Activated naive CD4-positive, alpha-beta T cell treated with anti-CD3 and anti-CD28 coated beads, Interleukin-2, amount 10 ng/mL, durations not matched to agents 7 days and 5 days (primary cell): ENCODE measurements at regions of chr2 and their contacts with region 1.

Region 1: GRCh38 chr2:73907840-73908452 is 15.1 kb downstream of the ACTG2 start:
- DNase-seq: peak; percentile 73
- H3K4me3 Mint-ChIP-seq: no peak overlapping the region
- H3K27ac Mint-ChIP-seq: no peak overlapping the region
- H3K4me1 Mint-ChIP-seq: no peaks in the 10 kb centered on the region
- H3K27me3 Mint-ChIP-seq: peaks cover 4% of the 10 kb centered on the region

Region 2: GRCh38 chr2:73828818-73829570 is 79.0 kb before region 1 on chr2 and contains the start of gene STAMBP:
- CTCF ChIA-PET with region 1: interaction called, 17 read pairs
- DNase-seq: peak; percentile 97
- H3K4me3 Mint-ChIP-seq: peak within 1 kb of the TSS; percentile 91
- H3K27ac Mint-ChIP-seq: peak within 1 kb of the TSS; percentile 94
- H3K4me1 Mint-ChIP-seq: peaks cover 40% of the 10 kb centered on the region
- H3K27me3 Mint-ChIP-seq: peaks cover 4% of the 10 kb centered on the region

Region 3: DNA sequence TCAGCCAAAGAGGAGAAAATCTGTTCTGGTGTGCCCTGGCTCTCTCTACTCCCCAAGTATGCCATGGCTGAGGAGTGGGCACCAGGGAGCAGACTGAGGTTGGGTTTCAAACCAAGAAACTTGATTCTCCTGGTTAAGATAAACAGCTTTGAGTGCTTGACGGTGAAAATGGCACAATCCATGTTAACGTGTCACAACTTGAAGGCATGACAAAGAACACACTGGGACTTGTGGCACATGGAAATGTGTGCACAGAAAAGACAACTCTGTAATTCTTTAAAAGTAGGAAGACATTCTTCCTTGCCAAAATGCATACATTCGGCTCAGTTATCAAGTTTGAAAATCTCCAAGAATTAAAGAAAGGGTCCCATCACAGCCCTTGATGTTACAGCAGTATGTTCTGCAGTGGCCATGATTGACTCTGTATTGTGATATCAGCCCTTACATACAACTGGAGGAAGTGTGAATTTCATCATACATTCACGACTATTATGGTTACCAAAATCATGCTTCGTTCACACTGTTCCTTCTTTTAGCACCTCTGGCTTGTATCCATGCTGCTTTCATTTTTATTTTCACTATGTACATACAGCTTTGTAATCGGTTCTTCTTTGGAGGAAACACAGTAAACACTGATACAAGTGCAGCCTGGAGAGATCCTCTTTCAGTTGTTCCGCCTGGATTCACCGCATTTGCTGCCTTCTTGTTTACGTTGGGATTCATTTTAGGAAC is 30.7 kb before region 1 on chr2:
- CTCF ChIA-PET with region 1: no interaction called
- DNase-seq: no peak
- H3K4me3 Mint-ChIP-seq: no peak overlapping the region
- H3K27ac Mint-ChIP-seq: no peak overlapping the region
- H3K4me1 Mint-ChIP-seq: no peaks in the 10 kb centered on the region
- H3K27me3 Mint-ChIP-seq: peaks cover 6% of the 10 kb centered on the region

Region 4: GRCh38 chr2:73987109-73987947 is 79.4 kb after region 1 on chr2:
- CTCF ChIA-PET with region 1: interaction called, 37 read pairs
- DNase-seq: peak; percentile 63
- H3K4me3 Mint-ChIP-seq: peak overlapping the region; percentile 77
- H3K27ac Mint-ChIP-seq: peak overlapping the region; percentile 34
- H3K4me1 Mint-ChIP-seq: peaks cover 68% of the 10 kb centered on the region
- H3K27me3 Mint-ChIP-seq: peaks cover 19% of the 10 kb centered on the region

Region 5: DNA sequence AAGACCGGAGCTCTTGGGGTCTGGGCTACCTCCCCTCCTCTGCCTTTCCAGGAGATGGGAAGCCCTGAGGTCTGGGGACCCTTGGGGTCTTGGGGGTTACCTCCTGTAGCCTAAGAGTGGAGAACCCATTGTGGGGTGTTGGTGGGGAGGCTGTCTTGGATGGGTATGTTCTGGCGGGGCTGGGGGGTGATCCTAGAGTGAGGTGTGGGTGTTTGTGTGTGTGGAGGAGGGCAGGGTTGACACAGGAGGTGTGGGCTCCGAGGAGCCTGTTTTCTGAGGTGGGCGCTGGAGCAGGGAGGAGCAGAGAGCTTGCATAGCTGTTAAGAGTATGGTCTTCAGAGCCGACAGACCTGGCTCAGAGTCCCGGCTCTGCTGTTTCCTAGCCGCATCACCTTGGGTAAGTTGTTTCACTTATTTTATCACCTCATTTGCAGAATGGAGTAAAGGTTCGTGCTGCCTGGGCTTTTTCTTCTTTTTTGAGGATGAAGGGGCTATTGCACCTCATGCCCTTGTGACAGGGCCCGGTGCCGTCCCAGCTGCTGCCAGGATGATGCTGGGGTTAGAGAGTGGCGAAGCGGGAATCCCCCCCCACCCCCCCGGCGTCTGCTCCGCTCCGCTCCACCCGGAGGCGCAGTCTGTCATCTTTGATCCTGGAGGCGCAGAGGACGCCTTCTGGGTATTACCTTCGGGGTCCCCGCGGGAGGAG is 94.0 kb after region 1 on chr2:
- CTCF ChIA-PET with region 1: interaction called, 11 read pairs
- DNase-seq: no peak
- H3K4me3 Mint-ChIP-seq: peak overlapping the region; percentile 70
- H3K27ac Mint-ChIP-seq: no peak overlapping the region
- H3K4me1 Mint-ChIP-seq: peaks cover 59% of the 10 kb centered on the region
- H3K27me3 Mint-ChIP-seq: peaks cover 13% of the 10 kb centered on the region

Region 6: DNA sequence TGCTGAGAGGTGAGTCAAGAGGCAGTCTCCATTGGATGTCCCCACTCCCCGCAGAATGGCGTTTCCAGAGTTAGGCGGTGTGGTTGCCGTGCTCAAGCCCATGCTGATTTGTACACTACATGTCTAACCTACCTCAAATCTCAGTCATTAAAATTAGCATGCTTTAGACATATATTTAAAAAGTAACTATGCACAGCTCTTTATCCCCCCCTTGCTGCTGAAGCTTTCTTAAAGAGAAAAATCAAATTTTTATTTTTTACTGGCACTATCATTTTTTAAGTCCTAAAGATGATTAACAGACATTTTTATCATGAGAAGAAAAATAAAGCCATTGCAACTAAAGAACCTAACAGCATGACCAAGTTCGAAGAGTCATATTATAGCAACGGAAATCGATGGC is 196.9 kb after region 1 on chr2:
- CTCF ChIA-PET with region 1: interaction called, 12 read pairs
- DNase-seq: no peak
- H3K4me3 Mint-ChIP-seq: no peak overlapping the region
- H3K27ac Mint-ChIP-seq: peak overlapping the region; percentile 33
- H3K4me1 Mint-ChIP-seq: no peaks in the 10 kb centered on the region
- H3K27me3 Mint-ChIP-seq: no peaks in the 10 kb centered on the region

Region 7: GRCh38 chr2:74147727-74148456 is 239.9 kb after region 1 on chr2 and contains the start of gene BOLA3:
- CTCF ChIA-PET with region 1: interaction called, 33 read pairs
- DNase-seq: peak; percentile 89
- H3K4me3 Mint-ChIP-seq: no peak within 1 kb of the TSS
- H3K27ac Mint-ChIP-seq: no peak within 1 kb of the TSS
- H3K4me1 Mint-ChIP-seq: peaks cover 8% of the 10 kb centered on the region
- H3K27me3 Mint-ChIP-seq: no peaks in the 10 kb centered on the region